ENCODE measurements at regions of chr1 and their contacts with region 1.

Region 1: GRCh38 chr1:12208764-12209494 is 20.9 kb upstream of the VPS13D start:
- DNase-seq: peak; percentile 86

Region 2: DNA sequence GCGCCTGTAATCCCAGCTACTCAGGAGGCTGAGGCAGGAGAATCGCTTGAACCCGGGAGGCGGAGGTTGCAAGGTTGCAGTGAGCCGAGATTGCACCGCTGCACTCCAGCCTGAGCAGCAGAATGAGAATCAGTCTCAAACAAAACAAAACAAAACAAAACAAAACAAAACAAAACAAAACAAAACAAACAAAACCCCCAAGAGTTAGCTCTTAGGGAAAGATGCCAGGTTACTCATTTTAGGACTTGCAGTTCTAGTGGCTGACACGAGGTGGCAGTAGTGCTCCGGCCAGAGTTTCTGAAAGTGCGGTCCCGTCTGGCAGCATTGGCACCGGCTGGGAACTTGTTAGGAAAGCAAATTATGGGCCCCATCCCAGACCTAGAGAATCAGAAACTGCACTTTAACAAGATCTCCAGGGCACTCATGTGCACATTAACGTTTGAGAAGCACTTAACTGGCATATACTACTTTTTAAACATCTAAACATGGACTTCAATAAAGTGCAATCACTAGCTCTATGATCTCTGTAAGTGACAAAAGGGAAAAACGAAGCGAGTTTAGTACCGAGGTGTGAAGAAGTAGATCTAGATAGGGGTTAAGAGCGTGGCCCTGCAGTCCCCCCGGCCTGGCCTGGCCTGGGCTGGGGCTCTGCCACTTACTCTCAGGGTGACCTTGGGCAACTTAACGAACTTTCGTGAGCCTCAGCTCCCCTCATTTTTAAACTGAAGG is 84.1 kb before region 1 on chr1:
- in situ Hi-C with region 1: loop called (anchors 5 kb)
- DNase-seq: peak; percentile 81

Measured in KBM-7 (cell line).